ENCODE measurements at regions of chr10 and their contacts with region 1.

Region 1: GRCh38 chr10:103602028-103602851 is 108.7 kb downstream of the NEURL1 start:
- DNase-seq: peak; percentile 62
- ATAC-seq: peak; percentile 7

Region 2: DNA sequence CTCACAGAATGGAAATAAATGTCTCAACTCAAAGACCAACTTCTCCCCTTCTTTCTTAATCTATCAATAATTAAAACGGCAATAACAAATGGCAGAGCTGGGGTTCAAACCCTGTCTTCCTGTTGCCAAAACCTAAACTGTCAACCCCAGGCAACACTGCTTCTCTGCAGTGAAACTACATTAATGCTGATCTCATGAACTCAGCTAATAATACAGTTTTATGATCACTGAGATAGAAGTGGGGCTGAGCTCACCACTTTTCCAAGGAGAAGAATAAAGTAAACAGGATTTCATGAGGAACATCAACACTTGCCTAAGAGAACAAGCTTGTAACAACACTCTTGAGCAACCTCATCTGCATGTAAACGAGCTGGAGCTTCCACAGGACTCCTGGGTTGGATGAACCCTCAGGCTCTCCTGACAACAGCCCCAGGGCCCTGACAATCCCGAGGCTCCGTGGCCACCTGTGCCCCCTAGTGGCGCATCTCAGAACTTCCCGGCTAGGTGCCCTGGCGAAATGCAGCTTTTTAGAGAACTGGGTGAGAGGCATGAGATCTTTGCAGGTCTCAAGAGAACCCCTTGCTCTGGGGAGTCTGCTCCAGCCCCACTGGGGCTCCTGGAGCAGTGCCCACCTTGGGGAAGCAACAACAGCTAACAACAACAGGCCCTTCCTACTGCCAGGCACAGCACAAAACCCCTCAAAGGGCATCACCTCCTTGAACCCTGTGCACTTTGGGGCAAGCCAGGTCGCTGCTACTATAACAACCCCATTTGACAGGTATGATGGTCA is 83.8 kb after region 1 on chr10:
- intact Hi-C with region 1: loop called (anchors 5 kb)
- DNase-seq: peak; percentile 91
- ATAC-seq: peak; percentile 89